ENCODE measurements at regions of chr20 and their contacts with region 1.

Region 1: DNA sequence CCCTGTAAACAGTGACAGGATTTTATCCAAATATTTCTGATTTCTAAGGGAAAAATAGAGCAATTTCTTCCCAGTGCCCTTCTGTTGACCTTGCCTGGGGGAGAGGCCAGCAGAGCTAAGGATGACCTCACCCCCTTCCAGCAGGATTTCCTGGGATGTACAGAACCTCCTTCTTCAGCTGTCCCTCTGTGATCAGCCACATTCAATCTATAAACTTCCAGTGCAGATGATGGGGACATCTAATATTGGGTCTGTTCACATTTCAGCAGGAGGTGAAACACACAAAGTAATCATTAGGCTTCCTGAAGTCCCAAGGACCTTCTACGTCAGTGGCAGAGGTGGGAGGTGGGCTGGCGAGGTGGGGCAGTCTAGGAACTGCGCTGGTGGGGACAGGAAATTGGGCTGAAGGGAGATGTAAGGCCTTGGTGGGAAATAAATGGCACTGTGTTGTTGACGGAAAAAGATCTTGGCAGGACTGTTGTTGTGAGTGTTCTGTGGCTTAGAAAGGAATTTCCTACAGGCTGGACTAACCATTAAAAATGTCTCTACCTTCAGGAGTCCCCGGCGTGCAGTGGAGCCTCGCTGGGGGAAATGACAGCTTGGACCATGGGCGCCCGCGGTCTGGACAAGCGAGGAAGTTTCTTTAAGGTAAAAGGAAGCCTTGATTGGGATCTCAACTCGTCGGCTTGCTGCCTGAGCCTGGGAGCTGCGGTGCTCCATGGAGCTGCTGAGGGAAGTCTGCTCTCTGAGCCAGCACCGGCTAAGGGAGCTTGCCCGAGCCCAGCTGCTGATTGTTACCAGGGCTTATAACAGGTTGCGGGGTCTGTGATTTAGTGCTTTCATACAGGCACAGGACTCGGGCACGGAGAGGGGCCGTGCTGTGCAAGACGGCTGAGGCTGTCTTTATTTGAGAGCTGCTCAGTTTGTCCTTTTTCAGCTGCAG is 127.9 kb upstream of the NAA20 start:
- DNase-seq: peak; percentile 56
- H3K4me3 ChIP-seq: peak overlapping the region; percentile 25 to 39 (median 31)
- H3K27ac ChIP-seq: peak overlapping the region; percentile 64
- H3K4me1 ChIP-seq: peaks cover 59% of the 10 kb centered on the region
- H3K27me3 ChIP-seq: no peaks in the 10 kb centered on the region
- CTCF ChIP-seq: no peak

Region 2: GRCh38 chr20:19815553-19815991 is 73.7 kb before region 1 on chr20:
- CTCF ChIA-PET with region 1: no interaction called
- dilution Hi-C with region 1: no loop called
- in situ Hi-C with region 1: no loop called
- intact Hi-C with region 1: loop called (anchors 1 kb)
- DNase-seq: peak; percentile 97
- H3K4me3 ChIP-seq: no peak overlapping the region
- H3K27ac ChIP-seq: peak overlapping the region; percentile 92
- H3K4me1 ChIP-seq: peaks cover 46% of the 10 kb centered on the region
- H3K27me3 ChIP-seq: no peaks in the 10 kb centered on the region
- CTCF ChIP-seq: peak in 1 of 2 donors; percentile 43

Region 3: GRCh38 chr20:19913927-19914614 is 24.8 kb after region 1 on chr20:
- CTCF ChIA-PET with region 1: no interaction called
- dilution Hi-C with region 1: no loop called
- in situ Hi-C with region 1: no loop called
- intact Hi-C with region 1: loop called (anchors 1 kb)
- DNase-seq: peak; percentile 97
- H3K4me3 ChIP-seq: no peak overlapping the region
- H3K27ac ChIP-seq: peak overlapping the region; percentile 94
- H3K4me1 ChIP-seq: peaks cover 35% of the 10 kb centered on the region
- H3K27me3 ChIP-seq: no peaks in the 10 kb centered on the region
- CTCF ChIP-seq: no peak

Region 4: GRCh38 chr20:19986419-19986818 is 97.1 kb after region 1 on chr20:
- CTCF ChIA-PET with region 1: no interaction called
- dilution Hi-C with region 1: no loop called
- in situ Hi-C with region 1: loop called in 1 of 2 experiments (anchors 5 kb)
- intact Hi-C with region 1: no loop called
- DNase-seq: peak; percentile 61
- H3K4me3 ChIP-seq: no peak overlapping the region
- H3K27ac ChIP-seq: peak overlapping the region; percentile 53
- H3K4me1 ChIP-seq: peaks cover 50% of the 10 kb centered on the region
- H3K27me3 ChIP-seq: no peaks in the 10 kb centered on the region
- CTCF ChIP-seq: no peak